ENCODE measurements at regions of chr3 and their contacts with region 1.

Region 1: GRCh38 chr3:50611464-50612233 is at the start of gene CISH:
- DNase-seq: peak; percentile 90 to 93
- ATAC-seq: peak; percentile 75 to 86 (median 78)
- H3K4me3 ChIP-seq: peak within 1 kb of the TSS; percentile 78
- H3K4me3 Mint-ChIP-seq: peak within 1 kb of the TSS; percentile 97
- H3K27ac ChIP-seq: peak within 1 kb of the TSS; percentile 62
- H3K27ac Mint-ChIP-seq: peak within 1 kb of the TSS; percentile 90 to 93
- H3K4me1 ChIP-seq: peaks cover 88% of the 10 kb centered on the region
- H3K4me1 Mint-ChIP-seq: peaks cover 77 to 86% of the 10 kb centered on the region in 2 donors
- H3K27me3 ChIP-seq: no peaks in the 10 kb centered on the region
- H3K27me3 Mint-ChIP-seq: no peaks in the 10 kb centered on the region
- CTCF ChIP-seq: peak; percentile 52
- total RNA-seq, gene CISH: 2.4 to 23.6 (median 11.3) TPM

Region 2: GRCh38 chr3:50519471-50520089 is 92.1 kb before region 1 on chr3:
- intact Hi-C with region 1: loop called (anchors 1 kb)
- DNase-seq: peak; percentile 72 to 84
- ATAC-seq: peak; percentile 66 to 87 (median 81)
- H3K4me3 ChIP-seq: no peak overlapping the region
- H3K4me3 Mint-ChIP-seq: no peak overlapping the region
- H3K27ac ChIP-seq: no peak overlapping the region
- H3K27ac Mint-ChIP-seq: no peak overlapping the region
- H3K4me1 ChIP-seq: peaks cover 23% of the 10 kb centered on the region
- H3K4me1 Mint-ChIP-seq: peaks cover 25 to 31% of the 10 kb centered on the region in 2 donors
- H3K27me3 ChIP-seq: no peaks in the 10 kb centered on the region
- H3K27me3 Mint-ChIP-seq: no peaks in the 10 kb centered on the region
- CTCF ChIP-seq: peak; percentile 89

Region 3: DNA sequence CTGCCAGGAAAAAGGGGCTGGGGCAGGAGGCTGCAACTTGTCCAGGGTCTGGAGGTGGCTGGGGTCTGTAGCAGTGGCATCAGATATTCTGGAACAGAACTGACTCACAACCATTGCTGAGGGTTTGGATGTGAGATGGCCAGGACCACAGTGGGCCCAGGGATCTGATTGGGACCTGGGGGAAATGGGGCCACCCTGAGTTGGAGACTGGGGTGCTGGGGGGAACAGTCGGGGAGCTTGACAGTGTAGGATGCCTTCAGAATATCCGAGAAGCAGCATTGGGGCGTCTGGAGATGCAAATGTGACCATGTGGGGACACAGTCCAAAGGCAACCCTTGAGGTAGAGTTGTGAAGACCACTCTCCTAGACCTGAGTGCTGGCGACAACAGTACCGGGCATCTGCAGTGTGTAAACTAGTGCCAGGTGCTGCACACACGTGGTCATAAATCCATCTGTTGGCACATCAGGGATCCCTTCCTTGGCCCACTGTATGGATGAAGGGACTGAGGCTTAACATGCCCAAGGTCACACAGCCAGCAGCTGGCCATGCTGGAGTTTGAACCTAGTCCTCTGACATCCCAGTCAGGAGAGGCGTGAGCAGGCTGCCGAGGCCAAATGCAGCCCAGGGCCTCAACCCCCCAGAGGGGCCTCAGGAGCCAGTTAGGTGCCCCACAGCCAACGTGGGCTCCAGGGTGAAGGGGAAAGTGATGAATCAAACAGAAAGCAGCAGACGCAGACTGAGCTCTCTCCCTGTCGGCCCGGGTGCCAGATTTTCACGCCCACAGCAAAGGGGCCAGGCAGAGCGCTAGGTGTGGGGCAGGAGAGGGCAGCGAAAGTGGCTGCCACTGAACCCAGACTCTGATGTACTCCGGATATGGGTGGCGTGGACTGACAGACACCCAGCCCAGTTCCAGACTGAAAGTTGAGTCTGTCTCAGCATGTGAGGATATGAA is 23.6 kb before region 1 on chr3:
- intact Hi-C with region 1: loop called (anchors 2 kb)
- DNase-seq: peak; percentile 53 to 76
- ATAC-seq: peak; percentile 78 to 91 (median 88)
- H3K4me3 ChIP-seq: no peak overlapping the region
- H3K4me3 Mint-ChIP-seq: peak overlapping the region; percentile 63
- H3K27ac ChIP-seq: peak overlapping the region; percentile 12
- H3K27ac Mint-ChIP-seq: peak overlapping the region; percentile 68 to 83
- H3K4me1 ChIP-seq: peaks cover 56% of the 10 kb centered on the region
- H3K4me1 Mint-ChIP-seq: peaks cover 47 to 63% of the 10 kb centered on the region in 2 donors
- H3K27me3 ChIP-seq: no peaks in the 10 kb centered on the region
- H3K27me3 Mint-ChIP-seq: no peaks in the 10 kb centered on the region
- CTCF ChIP-seq: no peak

Region 4: GRCh38 chr3:50652709-50653108 is 41.1 kb after region 1 on chr3:
- intact Hi-C with region 1: loop called (anchors 1 kb)
- DNase-seq: peak in 1 of 2 donors; percentile 70
- ATAC-seq: peak in 2 of 3 donors; percentile 70 to 76
- H3K4me3 ChIP-seq: no peak overlapping the region
- H3K4me3 Mint-ChIP-seq: no peak overlapping the region
- H3K27ac ChIP-seq: no peak overlapping the region
- H3K27ac Mint-ChIP-seq: no peak overlapping the region
- H3K4me1 ChIP-seq: no peaks in the 10 kb centered on the region
- H3K4me1 Mint-ChIP-seq: peaks cover 4 to 8% of the 10 kb centered on the region in 2 donors
- H3K27me3 ChIP-seq: no peaks in the 10 kb centered on the region
- H3K27me3 Mint-ChIP-seq: no peaks in the 10 kb centered on the region
- CTCF ChIP-seq: no peak

Region 5: DNA sequence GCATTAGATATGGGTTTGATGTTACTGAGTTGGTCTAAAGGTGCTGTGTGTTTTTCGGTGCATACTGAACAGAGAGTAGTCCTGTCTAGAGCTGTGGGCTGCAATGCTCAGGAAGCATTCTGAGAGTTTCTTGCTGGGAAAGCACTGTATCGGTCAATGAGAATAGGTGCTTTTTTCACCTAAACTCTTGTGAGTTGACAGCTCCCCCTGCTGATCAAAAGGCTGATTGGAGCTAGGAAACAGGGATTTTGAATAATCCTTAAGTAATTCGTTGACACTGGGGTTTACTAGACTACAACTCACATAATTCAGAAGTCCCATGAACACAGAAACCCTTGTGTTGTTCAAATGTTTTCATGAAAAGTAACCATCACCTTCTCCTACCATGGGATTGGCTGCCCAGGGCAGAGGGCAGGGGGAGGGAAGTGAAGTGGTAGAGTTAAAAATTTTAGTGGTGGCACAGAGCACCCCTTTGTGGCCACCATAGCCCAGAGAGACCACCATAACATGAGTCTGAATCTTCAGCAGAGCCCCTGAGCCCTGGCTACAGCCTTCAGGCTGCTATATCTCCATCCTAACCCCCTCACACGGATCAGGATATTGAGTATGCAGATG is 760.4 kb after region 1 on chr3:
- intact Hi-C with region 1: loop called (anchors 1 kb)
- DNase-seq: peak in 1 of 2 donors; percentile 78
- ATAC-seq: peak in 2 of 3 donors; percentile 66
- H3K4me3 ChIP-seq: no peak overlapping the region
- H3K4me3 Mint-ChIP-seq: no peak overlapping the region
- H3K27ac ChIP-seq: no peak overlapping the region
- H3K27ac Mint-ChIP-seq: no peak overlapping the region
- H3K4me1 ChIP-seq: no peaks in the 10 kb centered on the region
- H3K4me1 Mint-ChIP-seq: no peaks in the 10 kb centered on the region
- H3K27me3 ChIP-seq: no peaks in the 10 kb centered on the region
- H3K27me3 Mint-ChIP-seq: peaks cover 0 to 6% of the 10 kb centered on the region in 2 donors
- CTCF ChIP-seq: peak; percentile 67

Region 6: DNA sequence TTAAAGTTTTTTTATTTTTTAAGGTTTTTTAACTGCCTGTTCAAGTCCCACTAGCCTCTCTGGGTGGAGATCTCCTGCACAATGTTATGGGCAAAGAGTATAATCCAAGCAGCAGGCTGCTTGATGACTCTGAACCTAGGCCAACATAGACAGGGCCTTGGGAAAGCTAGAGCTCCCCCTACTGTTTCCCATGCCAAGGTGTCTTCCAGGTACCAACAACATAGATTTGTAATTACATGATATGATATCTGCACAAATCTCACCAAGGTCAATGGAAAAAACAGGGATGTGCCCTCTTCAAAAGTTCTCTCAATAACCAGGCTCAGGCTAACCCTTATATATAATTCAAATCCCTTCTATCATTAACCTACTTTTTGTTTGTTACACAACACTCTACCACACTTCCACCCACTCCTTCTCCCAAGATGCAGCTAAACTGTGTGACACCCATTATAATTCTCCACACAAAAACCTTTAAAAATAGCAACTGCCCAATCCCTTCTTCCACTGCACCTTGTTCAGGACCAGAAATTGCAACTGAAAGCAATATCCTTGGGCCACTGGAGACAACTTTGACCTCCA is 823.2 kb after region 1 on chr3:
- intact Hi-C with region 1: loop called (anchors 1 kb)
- DNase-seq: peak in 1 of 2 donors; percentile 78
- ATAC-seq: peak; percentile 79 to 88 (median 86)
- H3K4me3 ChIP-seq: no peak overlapping the region
- H3K4me3 Mint-ChIP-seq: no peak overlapping the region
- H3K27ac ChIP-seq: no peak overlapping the region
- H3K27ac Mint-ChIP-seq: peak overlapping the region in 1 of 2 donors; percentile 12
- H3K4me1 ChIP-seq: no peaks in the 10 kb centered on the region
- H3K4me1 Mint-ChIP-seq: peaks cover 5 to 8% of the 10 kb centered on the region in 2 donors
- H3K27me3 ChIP-seq: no peaks in the 10 kb centered on the region
- H3K27me3 Mint-ChIP-seq: no peaks in the 10 kb centered on the region
- CTCF ChIP-seq: peak; percentile 70

Region 7: GRCh38 chr3:51670823-51671733 is 1059.4 kb after region 1 on chr3 and contains the start of gene TEX264:
- intact Hi-C with region 1: loop called (anchors 5 kb)
- DNase-seq: peak; percentile 86 to 100
- ATAC-seq: peak; percentile 69 to 89 (median 78)
- H3K4me3 ChIP-seq: peak within 1 kb of the TSS; percentile 86
- H3K4me3 Mint-ChIP-seq: peak within 1 kb of the TSS; percentile 92
- H3K27ac ChIP-seq: peak within 1 kb of the TSS; percentile 85
- H3K27ac Mint-ChIP-seq: peak within 1 kb of the TSS; percentile 87 to 98
- H3K4me1 ChIP-seq: peaks cover 58% of the 10 kb centered on the region
- H3K4me1 Mint-ChIP-seq: peaks cover 57 to 62% of the 10 kb centered on the region in 2 donors
- H3K27me3 ChIP-seq: no peaks in the 10 kb centered on the region
- H3K27me3 Mint-ChIP-seq: no peaks in the 10 kb centered on the region
- CTCF ChIP-seq: no peak
- total RNA-seq, gene TEX264: 41.1 to 46.8 (median 45.4) TPM

Measured in natural killer cell (primary cell).